RWPE1 (cell line): ENCODE measurements at regions of chr11 and their contacts with region 1.

Region 1: GRCh38 chr11:75813622-75814039 is 1.4 kb upstream of the UVRAG start:
- DNase-seq: no peak
- H3K27ac ChIP-seq: peak overlapping the region; percentile 86
- CTCF ChIP-seq: no peak

Region 2: DNA sequence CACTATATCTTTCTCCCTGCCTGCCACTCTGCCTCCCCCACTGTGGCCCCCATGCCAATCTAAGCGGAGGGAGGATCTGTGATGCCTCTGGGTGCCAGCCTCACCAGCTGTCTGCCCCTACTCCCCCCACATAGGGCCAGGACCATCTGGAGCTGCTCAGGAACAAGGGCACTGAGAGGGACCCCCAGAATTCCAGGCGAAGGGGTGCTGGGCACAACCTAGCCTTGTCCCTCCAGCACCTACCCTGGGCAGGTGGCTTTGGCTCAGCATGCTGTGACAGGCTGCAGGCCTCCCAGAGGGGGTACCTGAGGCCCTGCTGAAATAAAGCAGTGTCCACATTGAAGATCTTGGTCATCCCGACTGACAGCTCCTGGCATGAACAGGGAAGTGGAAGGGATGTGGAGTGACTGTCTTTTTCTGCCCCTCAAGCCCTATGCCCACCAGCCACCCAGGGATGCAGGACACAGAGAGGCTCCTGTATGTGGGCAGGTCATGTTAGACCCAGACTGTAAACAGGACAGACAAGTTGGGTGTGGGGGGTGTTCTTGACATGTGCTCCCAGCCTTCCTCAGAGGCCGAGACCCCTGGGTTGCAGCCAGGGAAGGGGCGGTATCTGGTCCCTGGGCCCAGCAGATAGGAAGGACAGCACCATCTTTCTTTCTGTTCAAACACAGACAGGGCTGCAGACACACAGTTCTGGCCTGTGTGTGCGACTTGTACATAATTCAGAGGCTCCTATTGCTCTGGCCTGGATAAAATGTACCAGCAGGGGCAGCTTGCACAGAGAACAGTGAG is 304.8 kb before region 1 on chr11:
- CTCF ChIA-PET with region 1: no interaction called
- POLR2A ChIA-PET with region 1: no interaction called
- DNase-seq: no peak
- H3K27ac ChIP-seq: no peak overlapping the region
- CTCF ChIP-seq: no peak

Region 3: GRCh38 chr11:75802913-75803820 is 10.5 kb before region 1 on chr11:
- CTCF ChIA-PET with region 1: interaction called, 13 read pairs
- POLR2A ChIA-PET with region 1: no interaction called
- DNase-seq: peak; percentile 70
- H3K27ac ChIP-seq: no peak overlapping the region
- CTCF ChIP-seq: peak; percentile 82